Gastrocnemius medialis (tissue), 4 donors: ENCODE measurements at regions of chr5 and their contacts with region 1.

Region 1: GRCh38 chr5:141923448-141924352 is at the start of gene DELE1:
- DNase-seq: peak; percentile 91 to 93
- ATAC-seq: peak; percentile 96 to 97
- H3K4me3 ChIP-seq: peak within 1 kb of the TSS; percentile 77 to 97 (median 82)
- H3K27ac ChIP-seq: peak within 1 kb of the TSS; percentile 94 to 99 (median 96)
- H3K4me1 ChIP-seq: peaks cover 25 to 46% of the 10 kb centered on the region in 2 donors
- H3K27me3 ChIP-seq: no peaks in the 10 kb centered on the region
- CTCF ChIP-seq: no peak
- POLR2A ChIP-seq: peak; percentile 86 to 88
- total RNA-seq, gene DELE1: 31.3 to 91.6 (median 52.4) TPM

Region 2: GRCh38 chr5:141320225-141321169 is 603.2 kb before region 1 on chr5 and contains the start of gene TAF7:
- in situ Hi-C with region 1: no loop called
- intact Hi-C with region 1: loop called (anchors 10 kb)
- DNase-seq: peak; percentile 82 to 88
- ATAC-seq: peak; percentile 94 to 97
- H3K4me3 ChIP-seq: peak within 1 kb of the TSS; percentile 62 to 86 (median 84)
- H3K27ac ChIP-seq: peak within 1 kb of the TSS; percentile 85 to 97 (median 94)
- H3K4me1 ChIP-seq: peaks cover 32 to 35% of the 10 kb centered on the region in 2 donors
- H3K27me3 ChIP-seq: no peaks in the 10 kb centered on the region
- CTCF ChIP-seq: peak; percentile 79 to 95 (median 88)
- POLR2A ChIP-seq: peak; percentile 99 to 100
- total RNA-seq, gene TAF7: 60.9 to 91.2 (median 79.8) TPM

Region 3: DNA sequence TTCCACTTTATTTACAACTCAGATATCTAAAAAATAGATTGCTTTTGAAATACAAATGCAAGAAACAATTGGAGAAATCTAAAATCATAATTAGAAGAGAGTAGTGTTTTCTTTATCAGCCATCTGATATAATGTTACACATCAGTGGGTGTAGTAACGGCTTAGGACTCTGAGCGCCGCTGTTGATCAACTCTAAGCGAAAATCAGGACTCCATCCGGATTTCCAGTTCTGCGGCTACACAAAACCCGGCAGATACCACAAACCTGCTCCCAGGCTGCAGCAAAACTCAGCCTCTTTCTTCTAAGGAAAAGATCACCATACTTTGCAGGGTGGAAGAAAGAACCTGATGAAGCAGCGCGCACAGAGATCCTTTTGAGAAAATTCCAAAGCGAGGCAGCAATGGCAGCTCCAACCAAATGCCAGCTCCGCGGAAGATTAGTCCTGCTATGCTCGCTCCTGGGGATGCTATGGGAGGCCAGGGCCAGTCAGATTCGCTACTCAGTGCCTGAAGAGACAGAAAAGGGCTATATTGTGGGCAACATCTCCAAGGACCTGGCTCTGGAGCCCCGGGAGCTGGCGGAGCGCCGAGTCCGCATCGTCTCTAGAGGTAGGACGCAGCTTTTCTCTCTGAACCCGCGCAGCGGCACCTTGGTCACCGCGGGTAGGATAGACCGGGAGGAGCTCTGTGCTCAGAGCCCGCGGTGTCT is 521.0 kb before region 1 on chr5 and contains the start of gene PCDHGA9:
- in situ Hi-C with region 1: no loop called
- intact Hi-C with region 1: no loop called
- DNase-seq: no peak
- ATAC-seq: peak; percentile 55 to 63
- H3K4me3 ChIP-seq: peak within 1 kb of the TSS; percentile 29 to 45 (median 37)
- H3K27ac ChIP-seq: no peak within 1 kb of the TSS
- H3K4me1 ChIP-seq: peaks cover 14 to 15% of the 10 kb centered on the region in 2 donors
- H3K27me3 ChIP-seq: peaks cover 0 to 4% (median 0%) of the 10 kb centered on the region in 3 donors
- CTCF ChIP-seq: peak in 4 of 5 experiments; percentile 35 to 46 (median 40)
- POLR2A ChIP-seq: no peak
- total RNA-seq, gene PCDHGA9: 0.95 to 4.0 (median 1.5) TPM

Region 4: DNA sequence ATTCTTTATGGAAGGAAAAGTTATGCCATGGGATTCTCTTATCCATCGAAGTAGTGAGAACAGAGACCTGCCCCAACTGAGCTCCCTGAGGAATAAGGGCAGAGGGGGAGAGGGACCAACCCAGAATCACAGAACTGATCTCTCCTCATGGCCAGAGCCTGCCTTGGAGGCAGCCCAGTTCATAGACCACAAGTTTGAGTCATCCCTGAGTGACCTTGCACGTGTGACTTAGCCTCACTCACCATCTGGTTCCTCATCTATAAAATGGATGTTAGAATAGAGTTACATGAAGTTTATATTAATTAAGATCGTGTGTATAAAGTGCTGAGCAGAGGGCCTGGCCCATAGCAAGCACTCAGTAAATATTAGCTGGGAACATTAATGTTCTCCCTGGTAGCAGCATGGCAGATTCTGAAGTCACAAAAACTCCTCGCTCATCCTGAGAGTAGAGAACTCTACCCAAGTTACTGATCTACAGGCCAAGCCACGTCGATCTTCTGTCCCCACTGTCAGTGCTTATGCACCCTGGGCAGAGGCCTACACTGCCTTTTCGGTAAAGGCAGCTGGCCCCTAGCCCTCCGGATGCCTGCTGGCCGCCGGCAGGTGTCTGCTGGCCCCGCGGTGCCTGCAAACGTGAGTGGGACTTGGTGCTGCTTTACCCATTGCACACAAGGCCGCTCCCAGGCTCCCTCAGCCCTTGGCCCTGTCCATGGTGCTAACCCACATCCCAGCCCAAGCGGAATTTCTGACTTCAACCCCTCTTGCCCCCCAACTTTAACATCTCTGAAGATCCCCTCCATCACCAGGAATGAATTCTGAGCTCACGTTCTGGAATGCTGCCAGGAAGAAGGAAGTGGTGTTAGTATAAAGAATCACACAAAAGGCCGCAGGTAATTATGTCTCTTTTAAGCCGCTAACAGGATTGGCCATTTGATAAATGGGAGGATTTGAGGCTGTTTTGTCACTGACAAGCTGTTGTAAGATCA is 180.5 kb before region 1 on chr5:
- in situ Hi-C with region 1: no loop called
- intact Hi-C with region 1: no loop called
- DNase-seq: no peak
- ATAC-seq: no peak
- H3K4me3 ChIP-seq: no peak overlapping the region
- H3K27ac ChIP-seq: no peak overlapping the region
- H3K4me1 ChIP-seq: no peaks in the 10 kb centered on the region
- H3K27me3 ChIP-seq: no peaks in the 10 kb centered on the region
- CTCF ChIP-seq: no peak
- POLR2A ChIP-seq: no peak

Region 5: DNA sequence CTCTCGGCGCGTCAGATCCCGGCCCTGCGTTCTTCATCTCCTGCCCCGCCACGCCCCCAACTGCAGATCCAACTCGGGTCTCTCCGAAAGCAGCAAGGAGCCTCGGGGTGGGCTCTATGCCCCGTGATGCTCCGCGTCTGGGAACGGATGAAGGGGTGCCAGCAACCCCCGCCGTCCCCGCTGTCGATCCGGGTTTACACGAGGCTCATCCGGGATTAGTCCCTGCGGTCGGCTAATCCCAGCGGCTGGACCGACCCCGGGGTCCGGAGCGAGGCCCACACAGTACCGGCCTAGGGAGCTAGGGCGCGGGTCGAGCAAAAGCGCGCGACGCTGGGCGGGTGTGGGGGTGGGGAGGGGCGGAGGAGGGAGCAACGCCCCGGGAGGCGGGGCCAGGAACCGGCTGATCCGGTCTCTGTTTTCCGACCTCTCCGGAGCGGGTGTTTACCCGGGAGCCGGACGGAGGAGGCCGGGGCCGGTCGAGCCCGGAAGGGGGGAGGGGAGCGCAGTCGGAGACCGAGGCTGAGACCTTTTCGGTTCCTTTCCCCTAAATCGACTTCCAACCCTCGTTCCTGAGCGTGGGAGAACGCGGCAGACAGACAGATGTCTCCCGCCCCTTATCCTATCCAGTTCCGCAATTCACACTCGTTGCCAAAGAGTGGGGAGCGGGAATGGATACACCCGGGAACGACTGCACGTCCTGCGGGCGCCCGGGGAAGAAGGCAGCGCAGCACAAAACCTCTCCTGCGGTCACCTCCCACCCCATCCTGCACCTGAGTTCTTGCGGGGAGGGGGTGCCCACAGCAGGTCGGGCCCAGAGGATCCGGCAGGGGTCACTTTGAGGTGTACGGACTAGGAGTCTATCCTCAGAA is 74.1 kb before region 1 on chr5:
- in situ Hi-C with region 1: no loop called
- intact Hi-C with region 1: loop called (anchors 5 kb)
- DNase-seq: peak; percentile 57 to 65
- ATAC-seq: peak; percentile 80 to 87
- H3K4me3 ChIP-seq: peak overlapping the region; percentile 61 to 74 (median 66)
- H3K27ac ChIP-seq: peak overlapping the region; percentile 77 to 90 (median 82)
- H3K4me1 ChIP-seq: peaks cover 5 to 25% of the 10 kb centered on the region in 2 donors
- H3K27me3 ChIP-seq: peaks cover 9 to 26% (median 13%) of the 10 kb centered on the region in 3 donors
- CTCF ChIP-seq: peak in 3 of 5 experiments; percentile 22 to 38 (median 35)
- POLR2A ChIP-seq: peak; percentile 72 to 78

Region 6: GRCh38 chr5:141968914-141969608 is 45.4 kb after region 1 on chr5 and contains the start of gene RNF14:
- in situ Hi-C with region 1: no loop called
- intact Hi-C with region 1: loop called (anchors 2 kb)
- DNase-seq: peak; percentile 86 to 90
- ATAC-seq: peak; percentile 89 to 94
- H3K4me3 ChIP-seq: peak within 1 kb of the TSS; percentile 59 to 89 (median 76)
- H3K27ac ChIP-seq: peak within 1 kb of the TSS; percentile 88 to 97 (median 94)
- H3K4me1 ChIP-seq: peaks cover 17 to 26% of the 10 kb centered on the region in 2 donors
- H3K27me3 ChIP-seq: no peaks in the 10 kb centered on the region
- CTCF ChIP-seq: peak; percentile 94 to 98 (median 97)
- POLR2A ChIP-seq: peak; percentile 91 to 94
- total RNA-seq, gene RNF14: 71.4 to 107 (median 84.5) TPM

Region 7: DNA sequence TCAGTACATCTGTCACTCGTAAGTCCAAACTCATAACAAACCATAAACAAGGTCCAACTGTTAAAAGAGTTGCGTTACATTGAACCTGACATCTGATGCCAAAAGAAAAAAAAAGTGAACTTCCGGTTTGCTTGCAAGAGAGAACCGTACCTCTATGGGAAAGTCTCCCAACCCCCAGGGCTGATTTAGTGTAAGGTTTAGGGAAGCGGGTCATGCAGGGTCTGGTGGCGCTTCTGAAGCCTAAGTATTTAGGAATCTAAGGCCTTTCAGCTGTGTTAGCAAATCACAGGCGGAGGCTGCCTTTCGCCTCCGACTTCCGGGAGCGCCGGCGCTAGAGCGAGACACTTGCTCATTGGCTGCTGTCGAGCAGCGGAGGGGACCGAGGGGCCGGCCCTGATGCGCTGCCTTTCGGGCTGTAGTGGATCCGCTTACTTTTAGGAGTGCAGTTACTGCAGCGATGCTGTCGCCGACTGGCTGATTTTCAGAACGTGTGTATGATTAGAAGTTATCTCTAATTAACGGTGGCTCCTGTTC is 101.1 kb after region 1 on chr5:
- in situ Hi-C with region 1: no loop called
- intact Hi-C with region 1: no loop called
- DNase-seq: peak; percentile 72 to 82
- ATAC-seq: peak; percentile 95 to 97
- H3K4me3 ChIP-seq: peak overlapping the region; percentile 58 to 65 (median 60)
- H3K27ac ChIP-seq: peak overlapping the region; percentile 79 to 91 (median 89)
- H3K4me1 ChIP-seq: peaks cover 7 to 9% of the 10 kb centered on the region in 2 donors
- H3K27me3 ChIP-seq: no peaks in the 10 kb centered on the region
- CTCF ChIP-seq: no peak
- POLR2A ChIP-seq: peak in 1 of 2 donors; percentile 32

Region 8: GRCh38 chr5:142324871-142325724 is 401.4 kb after region 1 on chr5 and contains the start of gene SPRY4:
- in situ Hi-C with region 1: no loop called
- intact Hi-C with region 1: no loop called
- DNase-seq: peak; percentile 71 to 79
- ATAC-seq: peak; percentile 72 to 74
- H3K4me3 ChIP-seq: peak within 1 kb of the TSS; percentile 64 to 75 (median 70)
- H3K27ac ChIP-seq: peak within 1 kb of the TSS; percentile 70 to 78 (median 77)
- H3K4me1 ChIP-seq: peaks cover 23 to 33% of the 10 kb centered on the region in 2 donors
- H3K27me3 ChIP-seq: peaks cover 19 to 32% (median 27%) of the 10 kb centered on the region in 3 donors
- CTCF ChIP-seq: peak in 1 of 5 experiments; percentile 2
- POLR2A ChIP-seq: peak; percentile 63 to 82
- total RNA-seq, gene SPRY4: 4.3 to 6.9 (median 5.9) TPM